HEK293T (cell line): ENCODE measurements at regions of chr17 and their contacts with region 1.

Region 1: GRCh38 chr17:82507631-82508175 is 11.8 kb upstream of the FOXK2 start:
- DNase-seq: no peak

Region 2: DNA sequence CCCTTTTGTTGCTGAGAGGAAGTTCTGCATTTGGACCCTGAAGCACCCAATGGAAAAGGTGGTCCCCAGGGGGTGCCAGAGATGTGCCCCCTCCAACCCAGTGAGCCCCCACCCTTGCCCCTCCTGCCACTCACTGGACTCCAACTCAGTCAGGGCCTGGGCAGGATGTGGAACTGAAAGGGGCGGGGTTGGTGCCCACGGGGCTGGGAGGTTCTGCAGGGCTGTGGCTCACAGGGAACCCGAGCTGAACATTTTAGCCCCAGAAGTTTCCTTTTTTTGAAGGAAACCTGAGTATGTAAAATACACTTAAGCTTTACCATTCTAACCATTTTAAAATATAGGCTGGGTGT is 73.5 kb before region 1 on chr17:
- CTCF ChIA-PET with region 1: no interaction called
- POLR2A ChIA-PET with region 1: no interaction called
- DNase-seq: no peak

Region 3: DNA sequence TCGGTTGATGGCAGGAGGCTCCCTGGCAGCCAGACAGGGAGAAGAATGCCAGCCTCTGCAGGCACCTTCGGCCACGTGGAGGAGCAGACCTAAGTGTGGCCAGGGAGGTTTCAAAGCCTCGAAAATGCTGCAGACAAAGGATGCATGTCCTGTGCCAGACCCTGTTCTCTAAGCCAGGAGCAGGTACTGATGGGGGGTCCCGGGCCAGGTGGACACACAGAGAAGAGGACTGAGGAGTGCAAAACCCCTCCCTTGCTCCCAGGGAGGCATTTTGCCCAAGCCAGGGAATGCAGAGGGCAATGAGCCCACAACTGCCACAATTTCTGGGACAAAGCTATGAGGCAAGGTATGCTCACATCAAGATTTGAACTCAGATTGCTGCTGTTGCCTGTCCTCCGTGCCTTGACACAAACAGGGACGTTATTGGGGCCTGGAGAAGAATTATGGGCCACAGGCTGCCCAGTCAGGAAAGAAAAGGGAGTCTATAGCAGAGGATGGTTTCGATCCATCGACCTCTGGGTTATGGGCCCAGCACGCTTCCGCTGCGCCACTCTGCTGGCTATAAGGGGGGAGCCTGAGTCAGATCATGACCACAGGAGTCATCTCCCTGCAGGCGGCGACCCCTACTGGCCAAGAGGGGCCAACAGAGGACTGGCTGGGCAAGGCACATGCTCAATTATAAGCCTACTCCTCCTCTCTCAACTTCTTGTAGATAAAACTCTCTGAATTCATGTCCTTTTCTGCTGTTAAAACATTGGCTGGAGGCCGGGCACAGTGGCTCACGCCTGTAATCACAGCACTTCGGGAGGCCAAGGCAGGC is 13.3 kb before region 1 on chr17:
- CTCF ChIA-PET with region 1: interaction called, 3 read pairs
- POLR2A ChIA-PET with region 1: interaction called, 10 read pairs
- DNase-seq: peak; percentile 91